ENCODE measurements at regions of chr7 and their contacts with region 1.

Region 1: DNA sequence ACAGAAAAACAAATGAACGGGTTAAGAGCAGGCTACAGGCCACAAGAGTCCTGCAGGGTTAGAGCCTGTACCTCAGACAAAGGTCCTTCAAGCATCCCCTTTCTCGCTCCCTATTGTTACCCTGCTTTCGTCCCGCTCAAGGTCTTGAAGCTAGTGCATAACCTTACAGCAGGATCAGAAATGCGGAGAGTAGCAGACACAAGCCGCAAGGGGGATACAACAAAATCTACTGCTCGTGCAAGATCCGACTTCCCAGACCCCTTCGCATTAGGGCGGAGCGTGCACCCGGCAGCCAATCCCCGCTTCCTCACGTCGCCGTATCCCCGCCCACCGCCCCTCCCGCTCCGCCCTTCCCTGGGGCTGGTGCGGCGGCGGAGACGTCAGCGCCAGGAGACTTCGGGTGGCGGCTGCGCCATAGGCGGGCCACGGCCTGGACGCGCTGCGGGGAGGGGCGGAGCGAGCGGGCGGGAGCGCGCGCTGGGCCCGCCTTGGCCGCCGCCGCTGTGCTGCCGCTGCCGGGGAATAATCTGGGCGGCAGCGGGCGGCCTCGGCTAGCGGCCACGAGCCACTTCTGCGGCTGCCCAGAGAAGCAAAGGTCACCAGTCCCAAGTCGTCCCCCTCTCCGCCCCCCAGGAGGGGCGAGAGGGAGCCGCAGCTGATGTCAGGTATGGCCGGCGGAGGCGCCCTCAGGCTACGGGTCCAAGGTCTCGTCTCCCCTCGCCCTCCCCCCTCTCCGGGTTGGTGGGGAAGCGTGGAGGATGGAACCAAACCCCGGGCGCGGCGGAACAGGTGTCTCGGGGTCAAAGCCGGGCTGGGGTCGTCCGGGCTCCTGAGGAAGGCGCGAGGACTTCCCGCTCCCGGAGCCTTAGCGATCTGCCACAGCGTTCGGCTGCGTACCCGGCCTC is at the start of gene C1GALT1:
- DNase-seq: peak; percentile 99
- ATAC-seq: peak; percentile 89
- H3K4me3 Mint-ChIP-seq: peak within 1 kb of the TSS; percentile 81
- H3K27ac Mint-ChIP-seq: peak within 1 kb of the TSS; percentile 99
- H3K4me1 Mint-ChIP-seq: peaks cover 4% of the 10 kb centered on the region
- H3K27me3 Mint-ChIP-seq: no peaks in the 10 kb centered on the region
- total RNA-seq, gene C1GALT1: 35.3 to 37.1 TPM

Region 2: GRCh38 chr7:7103343-7104313 is 78.8 kb before region 1 on chr7:
- CTCF ChIA-PET with region 1: interaction called, 3 read pairs
- POLR2A ChIA-PET with region 1: no interaction called
- intact Hi-C with region 1: loop called in 1 of 2 experiments (anchors 5 kb)
- DNase-seq: no peak
- ATAC-seq: peak; percentile 57
- H3K4me3 Mint-ChIP-seq: no peak overlapping the region
- H3K27ac Mint-ChIP-seq: no peak overlapping the region
- H3K4me1 Mint-ChIP-seq: peaks cover 27% of the 10 kb centered on the region
- H3K27me3 Mint-ChIP-seq: no peaks in the 10 kb centered on the region

Region 3: GRCh38 chr7:7201578-7202374 is 19.4 kb after region 1 on chr7:
- CTCF ChIA-PET with region 1: interaction called, 10 read pairs
- POLR2A ChIA-PET with region 1: interaction called, 3 read pairs
- intact Hi-C with region 1: no loop called
- DNase-seq: peak; percentile 64
- ATAC-seq: peak; percentile 87
- H3K4me3 Mint-ChIP-seq: peak overlapping the region; percentile 58
- H3K27ac Mint-ChIP-seq: peak overlapping the region; percentile 83
- H3K4me1 Mint-ChIP-seq: peaks cover 74% of the 10 kb centered on the region
- H3K27me3 Mint-ChIP-seq: no peaks in the 10 kb centered on the region

Region 4: GRCh38 chr7:7416031-7416858 is 233.8 kb after region 1 on chr7:
- CTCF ChIA-PET with region 1: no interaction called
- POLR2A ChIA-PET with region 1: no interaction called
- intact Hi-C with region 1: loop called (anchors 1 to 5 kb)
- DNase-seq: peak; percentile 55
- ATAC-seq: peak; percentile 88
- H3K4me3 Mint-ChIP-seq: no peak overlapping the region
- H3K27ac Mint-ChIP-seq: peak overlapping the region; percentile 89
- H3K4me1 Mint-ChIP-seq: peaks cover 14% of the 10 kb centered on the region
- H3K27me3 Mint-ChIP-seq: no peaks in the 10 kb centered on the region

Region 5: DNA sequence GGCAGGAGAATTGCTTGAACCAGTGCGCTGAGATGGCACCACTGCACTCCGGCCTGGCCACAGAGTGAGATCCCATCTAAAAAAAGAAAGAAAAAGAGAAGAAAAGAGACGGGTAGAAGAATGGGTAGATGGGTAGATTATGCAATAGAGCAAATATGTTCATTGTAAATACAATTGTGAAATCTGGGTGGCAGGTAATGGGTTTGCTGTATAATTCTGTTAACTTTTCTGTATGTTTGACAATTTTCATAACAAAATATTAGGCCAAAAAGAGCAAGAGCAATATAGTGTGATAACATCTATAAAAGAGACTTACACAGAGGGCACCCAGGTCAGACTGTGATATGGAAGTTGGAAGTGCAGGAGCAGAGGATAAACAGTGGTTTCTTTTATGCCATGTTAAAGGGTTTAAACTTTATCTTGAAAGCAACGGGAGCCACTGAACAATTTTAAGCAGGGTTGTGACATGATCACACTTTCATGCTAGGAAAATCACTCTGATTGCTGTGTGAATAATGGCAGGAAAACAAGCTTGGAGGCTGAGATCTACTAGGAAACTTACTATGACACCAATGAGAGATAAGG is 359.9 kb after region 1 on chr7:
- CTCF ChIA-PET with region 1: interaction called, 3 read pairs
- POLR2A ChIA-PET with region 1: no interaction called
- intact Hi-C with region 1: loop called in 1 of 2 experiments (anchors 5 kb)
- DNase-seq: no peak
- ATAC-seq: no peak
- H3K4me3 Mint-ChIP-seq: no peak overlapping the region
- H3K27ac Mint-ChIP-seq: no peak overlapping the region
- H3K4me1 Mint-ChIP-seq: no peaks in the 10 kb centered on the region
- H3K27me3 Mint-ChIP-seq: peaks cover 7% of the 10 kb centered on the region

Region 6: DNA sequence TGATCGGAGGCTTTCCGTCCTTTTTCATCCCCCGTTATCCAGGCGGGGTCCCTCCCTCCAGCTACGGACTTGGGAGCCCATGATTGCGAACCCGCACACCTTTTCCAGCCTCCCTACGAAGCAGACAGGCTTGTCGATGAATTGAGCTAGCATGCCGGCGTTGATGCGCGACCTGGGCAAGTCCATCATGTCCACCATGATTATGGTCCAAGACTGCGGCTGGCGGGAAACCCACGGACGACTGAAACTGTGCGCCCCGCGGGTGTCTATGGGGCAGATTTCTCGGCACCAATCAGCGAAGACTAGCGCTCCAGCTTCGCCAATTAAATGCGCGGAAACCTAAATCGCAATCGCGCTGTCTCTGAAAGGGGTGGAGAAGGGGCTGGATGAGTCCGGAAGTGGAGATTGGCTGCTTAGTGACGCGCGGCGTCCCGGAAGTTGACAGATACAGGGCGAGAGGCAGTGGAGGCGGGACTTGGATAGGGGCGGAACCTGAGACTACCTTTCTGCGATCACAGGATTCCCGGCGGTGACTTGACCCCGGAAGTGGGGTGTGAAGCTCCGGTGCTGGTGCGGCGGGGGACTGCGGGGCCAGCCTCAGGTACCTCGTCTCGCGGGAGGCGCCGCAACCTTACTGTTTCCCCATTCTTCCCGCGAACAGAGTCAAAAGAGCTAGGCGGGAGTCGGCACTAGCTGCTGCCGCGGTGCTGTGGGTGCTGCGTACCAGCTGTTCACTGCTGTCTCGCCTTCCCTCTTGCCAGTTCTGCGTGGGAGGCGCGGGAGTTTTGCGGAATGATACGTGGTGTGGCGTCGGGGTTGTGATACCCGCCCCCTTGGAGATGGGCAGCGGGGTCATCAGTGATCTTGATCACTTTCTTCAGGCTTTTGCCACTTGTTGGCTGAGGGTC is 458.1 kb after region 1 on chr7 and contains the start of gene UMAD1:
- CTCF ChIA-PET with region 1: no interaction called
- POLR2A ChIA-PET with region 1: interaction called, 5 read pairs
- intact Hi-C with region 1: loop called (anchors 1 kb)
- DNase-seq: peak; percentile 99
- ATAC-seq: peak; percentile 92
- H3K4me3 Mint-ChIP-seq: peak within 1 kb of the TSS; percentile 93
- H3K27ac Mint-ChIP-seq: peak within 1 kb of the TSS; percentile 99
- H3K4me1 Mint-ChIP-seq: peaks cover 38% of the 10 kb centered on the region
- H3K27me3 Mint-ChIP-seq: no peaks in the 10 kb centered on the region
- total RNA-seq, gene UMAD1: 13.1 to 14.5 TPM

Region 7: GRCh38 chr7:8125680-8126444 is 943.5 kb after region 1 on chr7:
- CTCF ChIA-PET with region 1: no interaction called
- POLR2A ChIA-PET with region 1: no interaction called
- intact Hi-C with region 1: loop called (anchors 10 kb)
- DNase-seq: peak; percentile 88
- ATAC-seq: peak; percentile 93
- H3K4me3 Mint-ChIP-seq: peak overlapping the region; percentile 62
- H3K27ac Mint-ChIP-seq: peak overlapping the region; percentile 95
- H3K4me1 Mint-ChIP-seq: peaks cover 81% of the 10 kb centered on the region
- H3K27me3 Mint-ChIP-seq: peaks cover 5% of the 10 kb centered on the region

Measured in activated CD4-positive, alpha-beta T cell treated with anti-CD3 and anti-CD28 coated beads for 36 hours (primary cell).